Activated B cell treated with CpG ODN at 0.5 μM for 24 hours (primary cell): ENCODE measurements at regions of chr5 and their contacts with region 1.

Region 1: GRCh38 chr5:83199126-83199525 is 121.8 kb downstream of the XRCC4 start:
- DNase-seq: no peak
- ATAC-seq: no peak
- H3K4me3 Mint-ChIP-seq: no peak overlapping the region
- H3K27ac Mint-ChIP-seq: no peak overlapping the region
- H3K4me1 Mint-ChIP-seq: no peaks in the 10 kb centered on the region
- H3K27me3 Mint-ChIP-seq: no peaks in the 10 kb centered on the region
- CTCF ChIP-seq: no peak

Region 2: GRCh38 chr5:83179966-83180365 is 19.2 kb before region 1 on chr5:
- CTCF ChIA-PET with region 1: no interaction called
- POLR2A ChIA-PET with region 1: no interaction called
- intact Hi-C with region 1: loop called (anchors 2 kb)
- DNase-seq: no peak
- ATAC-seq: no peak
- H3K4me3 Mint-ChIP-seq: no peak overlapping the region
- H3K27ac Mint-ChIP-seq: no peak overlapping the region
- H3K4me1 Mint-ChIP-seq: no peaks in the 10 kb centered on the region
- H3K27me3 Mint-ChIP-seq: no peaks in the 10 kb centered on the region
- CTCF ChIP-seq: no peak

Region 3: DNA sequence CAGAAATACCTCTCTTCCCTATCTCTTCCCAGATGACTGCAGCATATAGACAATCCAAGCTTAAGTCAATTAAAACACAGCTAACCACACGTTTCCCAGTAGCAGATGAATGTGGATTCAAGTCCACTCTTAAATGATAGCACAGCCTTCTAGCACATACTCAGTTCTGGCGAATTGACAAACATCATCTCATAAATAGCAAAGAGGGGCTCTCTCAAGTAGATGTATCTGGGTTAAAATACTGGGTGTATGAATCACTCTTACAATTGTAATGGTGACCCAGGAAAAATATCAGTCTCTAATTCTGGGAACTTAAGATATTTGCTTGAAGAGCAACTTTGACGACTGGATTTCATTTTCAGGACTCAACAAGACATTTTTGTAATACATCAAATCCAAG is 588.5 kb after region 1 on chr5:
- CTCF ChIA-PET with region 1: no interaction called
- POLR2A ChIA-PET with region 1: no interaction called
- intact Hi-C with region 1: no loop called
- DNase-seq: no peak
- ATAC-seq: no peak
- H3K4me3 Mint-ChIP-seq: no peak overlapping the region
- H3K27ac Mint-ChIP-seq: no peak overlapping the region
- H3K4me1 Mint-ChIP-seq: no peaks in the 10 kb centered on the region
- H3K27me3 Mint-ChIP-seq: no peaks in the 10 kb centered on the region
- CTCF ChIP-seq: no peak